GM12878 (cell line): ENCODE measurements at regions of chr16 and their contacts with region 1.

Region 1: GRCh38 chr16:4734063-4734729 is at the starts of genes ANKS3 and DNAAF8:
- DNase-seq: peak; percentile 59
- ATAC-seq: peak; percentile 92
- H3K4me3 ChIP-seq: peak within 1 kb of the TSS; percentile 87
- H3K27ac ChIP-seq: peak within 1 kb of the TSS; percentile 73
- H3K4me1 ChIP-seq: peaks cover 2% of the 10 kb centered on the region; the same call in 1 of the 2 replicates
- H3K27me3 ChIP-seq: no peaks in the 10 kb centered on the region
- CTCF ChIP-seq: no peak
- EP300 ChIP-seq: no peak
- POLR2A ChIP-seq: peak; percentile 85
- RAD21 ChIP-seq: no peak
- polyA plus RNA-seq, gene ANKS3: 0.29 to 0.52 TPM
- polyA plus RNA-seq, gene DNAAF8: not detected

Region 2: GRCh38 chr16:4649744-4650442 is 84.3 kb before region 1 on chr16:
- CTCF ChIA-PET with region 1: interaction called, 11 read pairs
- POLR2A ChIA-PET with region 1: no interaction called
- RAD21 ChIA-PET with region 1: no interaction called
- SMC1A ChIA-PET with region 1: no interaction called
- in situ Hi-C with region 1: no loop called
- intact Hi-C with region 1: no loop called
- DNase-seq: no peak
- ATAC-seq: no peak; the same call in 2 of the 3 replicates
- H3K4me3 ChIP-seq: no peak overlapping the region
- H3K27ac ChIP-seq: no peak overlapping the region
- H3K4me1 ChIP-seq: no peaks in the 10 kb centered on the region
- H3K27me3 ChIP-seq: no peaks in the 10 kb centered on the region
- CTCF ChIP-seq: no peak
- EP300 ChIP-seq: no peak
- POLR2A ChIP-seq: no peak
- RAD21 ChIP-seq: no peak

Region 3: DNA sequence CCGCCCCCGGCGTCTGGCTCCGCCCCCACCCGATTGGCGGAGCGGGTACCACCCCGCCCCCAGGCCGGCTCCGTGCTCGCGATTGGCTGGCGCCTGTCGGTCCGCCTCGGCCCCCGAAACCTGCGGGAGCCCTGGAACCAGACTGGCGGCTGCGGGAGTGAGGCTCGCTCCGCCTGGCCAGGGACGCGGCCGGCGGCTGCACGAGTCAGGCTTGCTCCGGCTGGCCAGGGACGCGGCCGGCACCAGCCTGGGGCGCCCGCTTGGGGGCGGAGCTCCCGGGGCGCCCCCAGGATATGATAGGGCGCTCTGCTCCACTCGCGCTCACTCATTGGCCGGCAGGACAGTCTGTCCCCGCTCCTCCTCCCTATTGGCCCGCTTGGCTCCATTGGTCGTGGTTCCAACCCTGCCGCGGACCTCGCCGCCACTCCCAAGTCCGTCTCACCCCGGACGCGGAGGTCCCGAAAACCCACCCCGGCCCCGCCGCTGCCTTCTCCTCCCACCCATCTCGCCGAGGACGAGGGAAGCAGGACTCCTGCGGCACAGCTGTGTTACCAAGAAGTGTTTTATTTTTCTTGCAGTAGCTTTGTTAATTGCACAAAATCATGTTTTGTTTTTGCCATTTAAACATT is 68.6 kb after region 1 on chr16:
- CTCF ChIA-PET with region 1: interaction called, 5 read pairs
- POLR2A ChIA-PET with region 1: interaction called, 5 read pairs
- RAD21 ChIA-PET with region 1: interaction called, 18 read pairs
- SMC1A ChIA-PET with region 1: interaction called, 11 read pairs
- in situ Hi-C with region 1: no loop called
- intact Hi-C with region 1: loop called (anchors 2 kb)
- DNase-seq: peak; percentile 47
- ATAC-seq: peak; percentile 97
- H3K4me3 ChIP-seq: peak overlapping the region; percentile 72
- H3K27ac ChIP-seq: peak overlapping the region; percentile 20; the same call in 1 of the 2 replicates
- H3K4me1 ChIP-seq: peaks cover 20% of the 10 kb centered on the region
- H3K27me3 ChIP-seq: no peaks in the 10 kb centered on the region
- CTCF ChIP-seq: no peak
- EP300 ChIP-seq: no peak
- POLR2A ChIP-seq: peak; percentile 74
- RAD21 ChIP-seq: no peak